ENCODE measurements at regions of chr10 and their contacts with region 1.

Region 1: GRCh38 chr10:26556748-26557640 is 118.9 kb downstream of the APBB1IP start:
- DNase-seq: peak; percentile 68
- H3K4me3 ChIP-seq: no peak overlapping the region
- H3K27ac ChIP-seq: no peak overlapping the region
- H3K4me1 ChIP-seq: no peaks in the 10 kb centered on the region
- H3K27me3 ChIP-seq: no peaks in the 10 kb centered on the region
- CTCF ChIP-seq: peak; percentile 90

Region 2: DNA sequence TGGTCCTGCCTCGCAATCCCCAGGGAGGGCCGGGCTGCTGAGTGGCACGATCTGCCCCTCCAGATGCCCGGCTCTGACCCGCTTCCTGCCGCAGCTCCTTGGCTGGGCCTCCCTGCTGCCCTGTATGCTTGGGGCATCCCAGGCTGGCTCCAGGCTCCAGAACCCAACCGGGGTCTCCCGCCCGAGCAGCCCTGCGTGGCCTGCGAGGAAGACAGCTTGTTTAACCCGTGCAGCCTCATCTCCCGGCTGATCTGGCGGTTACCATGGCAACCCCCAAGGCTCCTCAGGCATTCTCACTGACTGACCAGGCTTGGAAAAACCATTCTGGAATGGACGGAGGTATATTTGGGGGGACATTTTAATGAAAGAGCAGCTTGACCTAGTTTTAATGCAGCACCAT is 855.3 kb before region 1 on chr10:
- CTCF ChIA-PET with region 1: no interaction called
- POLR2A ChIA-PET with region 1: no interaction called
- intact Hi-C with region 1: loop called (anchors 5 kb)
- DNase-seq: no peak
- H3K4me3 ChIP-seq: no peak overlapping the region
- H3K27ac ChIP-seq: no peak overlapping the region
- H3K4me1 ChIP-seq: no peaks in the 10 kb centered on the region
- H3K27me3 ChIP-seq: no peaks in the 10 kb centered on the region
- CTCF ChIP-seq: no peak

Region 3: GRCh38 chr10:25725918-25726716 is 830.9 kb before region 1 on chr10:
- CTCF ChIA-PET with region 1: no interaction called
- POLR2A ChIA-PET with region 1: no interaction called
- intact Hi-C with region 1: loop called (anchors 2 kb)
- DNase-seq: peak; percentile 89
- H3K4me3 ChIP-seq: no peak overlapping the region
- H3K27ac ChIP-seq: no peak overlapping the region
- H3K4me1 ChIP-seq: no peaks in the 10 kb centered on the region
- H3K27me3 ChIP-seq: no peaks in the 10 kb centered on the region
- CTCF ChIP-seq: peak; percentile 79

Region 4: DNA sequence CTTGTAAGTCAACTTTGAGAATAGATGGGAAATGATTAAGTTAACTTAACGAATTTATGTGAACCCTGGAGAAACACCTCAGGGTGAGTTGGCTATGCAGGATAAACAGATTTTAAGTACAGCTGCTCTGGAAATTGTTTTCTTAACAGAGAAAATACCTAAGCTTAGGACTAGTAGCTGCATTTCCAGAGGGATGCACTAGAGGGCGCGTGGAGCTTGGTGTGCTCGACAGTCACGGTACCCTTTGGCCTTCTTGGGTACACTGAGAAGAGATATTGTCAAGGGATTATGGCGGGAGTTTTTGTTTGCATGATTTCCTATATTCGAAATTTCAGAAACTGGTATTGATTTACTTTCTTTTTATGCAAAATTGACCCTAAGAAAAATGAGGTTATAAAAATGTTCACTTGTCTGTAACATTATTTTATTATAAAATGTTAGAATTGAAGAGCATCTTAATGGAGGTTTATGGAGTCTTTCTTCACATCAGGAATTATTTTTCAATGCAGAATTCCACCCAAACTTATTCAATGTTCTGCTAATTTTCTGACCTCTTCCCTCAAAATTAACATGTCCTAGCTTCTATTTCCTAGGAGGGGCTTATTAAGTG is 681.3 kb before region 1 on chr10:
- CTCF ChIA-PET with region 1: no interaction called
- POLR2A ChIA-PET with region 1: no interaction called
- intact Hi-C with region 1: loop called (anchors 2 kb)
- DNase-seq: peak; percentile 87
- H3K4me3 ChIP-seq: no peak overlapping the region
- H3K27ac ChIP-seq: no peak overlapping the region
- H3K4me1 ChIP-seq: no peaks in the 10 kb centered on the region
- H3K27me3 ChIP-seq: no peaks in the 10 kb centered on the region
- CTCF ChIP-seq: peak; percentile 96

Region 5: GRCh38 chr10:26044141-26044749 is 512.7 kb before region 1 on chr10:
- CTCF ChIA-PET with region 1: no interaction called
- POLR2A ChIA-PET with region 1: no interaction called
- intact Hi-C with region 1: no loop called
- DNase-seq: peak; percentile 58
- H3K4me3 ChIP-seq: no peak overlapping the region
- H3K27ac ChIP-seq: no peak overlapping the region
- H3K4me1 ChIP-seq: no peaks in the 10 kb centered on the region
- H3K27me3 ChIP-seq: no peaks in the 10 kb centered on the region
- CTCF ChIP-seq: no peak

Region 6: DNA sequence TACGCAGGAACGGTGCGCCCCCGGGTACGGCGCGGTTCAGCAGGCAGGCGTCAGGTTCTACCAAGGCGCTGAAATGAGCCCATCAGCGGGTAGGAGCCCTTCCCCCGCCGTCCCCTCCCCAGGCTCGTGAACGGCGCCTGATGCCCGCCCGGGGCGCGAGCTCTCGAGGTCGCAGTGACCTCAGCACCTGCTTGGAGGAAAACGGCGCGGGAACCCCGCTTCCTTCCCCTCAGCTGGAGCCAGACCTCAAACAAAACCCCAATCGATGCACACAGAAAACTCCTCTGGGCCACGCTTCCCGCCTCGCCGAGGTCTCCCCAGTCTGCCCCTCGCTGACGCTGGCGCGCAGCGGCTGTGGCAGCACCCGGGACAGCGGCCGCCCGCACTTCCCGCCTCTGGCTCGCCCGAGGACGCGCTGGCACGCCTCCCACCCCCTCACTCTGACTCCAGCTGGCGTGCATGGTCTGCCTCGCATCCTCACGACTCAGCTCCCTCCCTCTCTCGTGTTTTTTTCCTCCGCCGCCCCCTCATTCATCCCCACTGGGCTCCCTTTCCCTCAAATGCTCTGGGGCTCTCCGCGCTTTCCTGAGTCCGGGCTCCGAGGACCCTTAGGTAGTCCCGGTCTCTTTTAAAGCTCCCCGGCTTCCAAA is 340.9 kb before region 1 on chr10:
- CTCF ChIA-PET with region 1: no interaction called
- POLR2A ChIA-PET with region 1: no interaction called
- intact Hi-C with region 1: no loop called
- DNase-seq: peak; percentile 72
- H3K4me3 ChIP-seq: peak overlapping the region; percentile 34
- H3K27ac ChIP-seq: no peak overlapping the region
- H3K4me1 ChIP-seq: peaks cover 17% of the 10 kb centered on the region
- H3K27me3 ChIP-seq: peaks cover 99% of the 10 kb centered on the region
- CTCF ChIP-seq: no peak

Region 7: DNA sequence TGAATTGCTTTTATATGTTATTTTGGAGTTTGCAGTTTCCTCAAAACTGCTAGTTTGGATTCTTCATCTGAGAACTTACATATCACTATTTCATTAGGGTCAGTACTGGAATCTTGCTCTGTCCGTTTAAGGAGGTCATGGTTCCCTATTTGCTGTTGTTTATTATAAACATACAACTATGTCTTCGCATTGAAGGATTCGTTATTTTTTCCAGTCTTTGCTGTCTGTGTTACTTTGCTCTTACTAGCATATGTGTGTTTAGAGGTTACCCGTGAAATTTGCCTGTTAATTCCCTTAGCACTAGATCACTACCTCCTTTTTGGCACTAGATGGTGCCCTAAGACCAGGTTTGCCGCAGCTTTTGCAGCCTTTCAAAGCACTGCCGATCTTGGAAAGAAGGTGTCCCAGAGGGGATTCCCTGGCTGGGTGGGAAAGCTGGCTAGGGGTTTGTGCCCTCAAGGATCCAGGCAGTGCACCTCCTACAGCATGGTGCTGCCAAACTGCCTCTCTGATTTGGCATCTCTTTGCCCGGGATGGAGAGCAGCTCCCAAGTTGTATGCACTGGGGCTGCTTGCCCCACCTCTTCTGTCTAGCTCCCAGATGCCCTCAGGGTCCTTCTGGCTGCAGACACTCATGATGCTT is 221.9 kb before region 1 on chr10:
- CTCF ChIA-PET with region 1: interaction called, 3 read pairs
- POLR2A ChIA-PET with region 1: no interaction called
- intact Hi-C with region 1: loop called (anchors 1 kb)
- DNase-seq: peak; percentile 81
- H3K4me3 ChIP-seq: no peak overlapping the region
- H3K27ac ChIP-seq: no peak overlapping the region
- H3K4me1 ChIP-seq: no peaks in the 10 kb centered on the region
- H3K27me3 ChIP-seq: no peaks in the 10 kb centered on the region
- CTCF ChIP-seq: peak; percentile 87

Region 8: DNA sequence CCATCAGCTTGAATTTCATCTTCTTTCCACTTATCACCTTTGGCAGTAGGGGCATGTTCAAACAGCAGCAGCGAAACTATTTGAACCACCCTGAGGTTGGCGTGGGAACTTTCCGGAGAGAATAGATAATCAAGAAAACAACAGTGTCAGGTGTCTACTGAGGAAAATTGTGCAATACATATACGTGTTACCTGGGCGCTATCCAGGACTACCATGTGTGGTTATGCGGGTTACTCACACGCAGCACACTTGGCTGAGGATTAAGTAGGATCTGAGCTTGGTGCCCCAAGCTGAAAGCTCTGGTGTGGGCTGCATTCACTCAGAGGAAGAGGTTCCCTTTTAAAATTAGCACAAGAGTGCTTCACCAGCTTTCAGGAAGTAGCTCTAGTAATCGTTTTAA is 312.5 kb after region 1 on chr10:
- CTCF ChIA-PET with region 1: no interaction called
- POLR2A ChIA-PET with region 1: no interaction called
- intact Hi-C with region 1: no loop called
- DNase-seq: no peak
- H3K4me3 ChIP-seq: no peak overlapping the region
- H3K27ac ChIP-seq: no peak overlapping the region
- H3K4me1 ChIP-seq: no peaks in the 10 kb centered on the region
- H3K27me3 ChIP-seq: no peaks in the 10 kb centered on the region
- CTCF ChIP-seq: no peak

Region 9: DNA sequence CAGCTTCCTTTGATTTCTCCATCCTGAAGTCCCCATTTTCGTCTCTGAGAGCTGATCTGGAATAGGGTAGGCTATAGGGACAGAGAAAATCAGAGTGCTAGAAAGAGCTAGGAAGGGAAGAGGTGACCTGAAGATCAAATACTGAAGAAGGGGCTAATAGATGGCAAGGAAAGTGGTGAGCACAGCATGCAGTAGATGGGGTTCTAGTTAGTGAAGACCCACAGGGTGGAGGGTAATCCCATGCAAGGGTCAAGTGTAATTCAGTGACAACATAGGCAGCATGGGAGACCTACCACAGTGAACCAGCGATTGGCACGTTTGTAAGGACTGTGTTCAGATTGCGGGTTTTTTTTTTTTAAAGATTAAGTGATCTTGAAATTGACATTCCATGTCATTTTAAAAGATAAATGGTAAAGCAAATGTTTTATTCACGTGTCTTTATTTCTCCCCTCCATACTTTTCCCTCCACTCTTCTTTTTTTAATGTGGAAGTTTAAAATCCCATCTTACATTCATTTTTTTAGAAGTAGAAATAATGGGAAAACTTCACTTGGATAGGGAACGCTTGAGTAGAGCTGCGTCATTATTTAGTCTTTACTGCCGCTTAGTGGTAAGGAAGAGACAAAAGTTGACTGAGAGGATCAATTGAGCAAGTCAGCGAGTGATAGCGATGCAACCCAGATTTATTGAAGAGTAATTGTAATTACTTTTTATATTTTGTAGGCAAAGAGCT is 324.8 kb after region 1 on chr10:
- CTCF ChIA-PET with region 1: no interaction called
- POLR2A ChIA-PET with region 1: no interaction called
- intact Hi-C with region 1: loop called (anchors 5 kb)
- DNase-seq: peak; percentile 81
- H3K4me3 ChIP-seq: peak overlapping the region; percentile 17
- H3K27ac ChIP-seq: no peak overlapping the region
- H3K4me1 ChIP-seq: no peaks in the 10 kb centered on the region
- H3K27me3 ChIP-seq: no peaks in the 10 kb centered on the region
- CTCF ChIP-seq: peak; percentile 77

Region 10: GRCh38 chr10:26946102-26946811 is 389.3 kb after region 1 on chr10:
- CTCF ChIA-PET with region 1: no interaction called
- POLR2A ChIA-PET with region 1: no interaction called
- intact Hi-C with region 1: no loop called
- DNase-seq: no peak
- H3K4me3 ChIP-seq: no peak overlapping the region
- H3K27ac ChIP-seq: no peak overlapping the region
- H3K4me1 ChIP-seq: no peaks in the 10 kb centered on the region
- H3K27me3 ChIP-seq: no peaks in the 10 kb centered on the region
- CTCF ChIP-seq: no peak

Measured in A673 (cell line).